ENCODE measurements at regions of chr10 and their contacts with region 1.

Region 1: DNA sequence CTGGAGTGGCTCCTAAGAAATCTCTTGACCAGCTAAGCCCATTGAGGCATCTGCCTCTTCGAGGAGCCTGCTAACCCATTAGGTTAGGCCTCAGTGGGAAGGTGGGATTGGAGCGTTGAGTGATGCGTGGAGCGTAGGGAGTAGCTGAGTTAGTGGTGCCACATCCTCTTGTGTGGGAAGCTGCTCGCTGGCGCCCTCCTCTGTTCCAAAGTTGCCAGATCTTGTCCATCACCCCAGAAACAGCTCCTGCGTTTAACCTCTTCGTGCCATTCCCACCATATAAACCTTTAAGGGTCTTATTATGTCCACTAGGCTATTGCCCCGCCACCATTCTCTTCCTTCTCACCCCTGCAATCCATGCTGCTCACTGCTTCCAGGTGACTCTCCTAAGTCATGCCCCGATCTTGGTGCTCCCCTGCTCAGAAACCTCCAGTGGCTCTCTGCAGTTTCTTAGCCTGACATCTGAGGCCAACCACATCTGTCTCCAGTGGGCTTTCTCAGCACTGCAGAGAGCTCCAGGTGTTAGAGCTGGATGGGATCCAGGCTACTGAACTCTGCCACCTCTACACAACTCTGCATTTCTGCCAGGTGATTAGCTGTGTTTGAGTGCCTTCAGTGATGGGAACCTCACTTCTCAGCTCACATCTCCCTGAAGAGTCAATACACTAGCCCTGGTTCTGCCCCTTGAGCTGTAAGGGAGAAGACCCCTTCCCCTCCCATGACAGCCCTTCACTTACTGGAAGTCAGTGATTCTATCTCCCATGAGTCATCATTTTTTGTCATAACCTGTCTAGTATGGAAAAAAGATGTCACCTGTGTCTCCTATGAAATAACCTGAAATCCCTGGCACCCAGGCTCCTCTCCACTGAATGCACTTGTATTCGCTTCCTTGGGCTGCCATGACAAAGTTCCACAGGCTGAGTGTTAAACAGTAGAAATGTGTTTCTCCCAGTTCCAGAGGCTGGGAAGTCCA is 65.0 kb upstream of the FGFR2 start:
- DNase-seq: peak; percentile 80
- ATAC-seq: peak; percentile 93
- H3K4me3 Mint-ChIP-seq: no peak overlapping the region
- H3K27ac Mint-ChIP-seq: no peak overlapping the region
- H3K4me1 Mint-ChIP-seq: peaks cover 6% of the 10 kb centered on the region
- H3K27me3 Mint-ChIP-seq: no peaks in the 10 kb centered on the region; the same call in 1 of the 2 replicates
- CTCF ChIP-seq: peak; percentile 85

Region 2: DNA sequence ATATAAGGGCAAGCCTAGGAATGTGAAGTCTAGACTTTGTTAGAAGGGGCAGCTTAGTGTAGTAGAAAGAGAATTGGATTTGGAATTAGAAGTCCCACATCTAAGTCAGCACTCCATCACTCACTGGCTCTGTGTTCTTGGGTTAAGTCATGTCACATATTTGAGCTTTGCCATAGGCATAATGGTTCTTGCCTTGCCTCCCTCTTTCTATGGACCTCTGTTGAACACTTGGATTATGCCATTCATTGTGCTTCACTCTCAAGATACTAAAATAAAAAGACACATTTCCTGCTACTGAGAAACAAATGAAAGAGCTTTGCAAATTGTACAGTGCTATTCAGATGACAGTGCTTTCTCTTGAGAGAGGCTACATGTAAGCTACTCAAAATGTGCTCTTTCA is 1734.8 kb before region 1 on chr10:
- CTCF ChIA-PET with region 1: no interaction called
- POLR2A ChIA-PET with region 1: no interaction called
- DNase-seq: no peak
- ATAC-seq: no peak
- H3K4me3 Mint-ChIP-seq: no peak overlapping the region
- H3K27ac Mint-ChIP-seq: peak overlapping the region; percentile 12; the same call in 1 of the 2 replicates
- H3K4me1 Mint-ChIP-seq: no peaks in the 10 kb centered on the region
- H3K27me3 Mint-ChIP-seq: no peaks in the 10 kb centered on the region
- CTCF ChIP-seq: no peak

Region 3: GRCh38 chr10:121598207-121598862 is 64.9 kb before region 1 on chr10 and contains the start of gene FGFR2:
- CTCF ChIA-PET with region 1: interaction called, 11 read pairs
- POLR2A ChIA-PET with region 1: no interaction called
- DNase-seq: peak; percentile 89
- ATAC-seq: peak; percentile 77
- H3K4me3 Mint-ChIP-seq: peak within 1 kb of the TSS; percentile 99
- H3K27ac Mint-ChIP-seq: peak within 1 kb of the TSS; percentile 99
- H3K4me1 Mint-ChIP-seq: peaks cover 60% of the 10 kb centered on the region
- H3K27me3 Mint-ChIP-seq: peaks cover 4% of the 10 kb centered on the region; the same call in 1 of the 2 replicates
- CTCF ChIP-seq: no peak
- total RNA-seq, gene FGFR2: 88.6 to 95.0 TPM (median 90.4 TPM) in 3 replicates

Region 4: GRCh38 chr10:121608469-121609190 is 54.6 kb before region 1 on chr10:
- CTCF ChIA-PET with region 1: interaction called, 23 read pairs
- POLR2A ChIA-PET with region 1: no interaction called
- DNase-seq: peak; percentile 72
- ATAC-seq: peak; percentile 81
- H3K4me3 Mint-ChIP-seq: peak overlapping the region; percentile 40; the same call in 1 of the 2 replicates
- H3K27ac Mint-ChIP-seq: no peak overlapping the region
- H3K4me1 Mint-ChIP-seq: peaks cover 34% of the 10 kb centered on the region
- H3K27me3 Mint-ChIP-seq: peaks cover 16% of the 10 kb centered on the region
- CTCF ChIP-seq: peak; percentile 93

Region 5: GRCh38 chr10:121696854-121697253 is 33.6 kb after region 1 on chr10:
- CTCF ChIA-PET with region 1: interaction called, 24 read pairs
- POLR2A ChIA-PET with region 1: no interaction called
- DNase-seq: peak; percentile 87
- ATAC-seq: peak; percentile 87
- H3K4me3 Mint-ChIP-seq: no peak overlapping the region
- H3K27ac Mint-ChIP-seq: no peak overlapping the region
- H3K4me1 Mint-ChIP-seq: peaks cover 14% of the 10 kb centered on the region
- H3K27me3 Mint-ChIP-seq: 0 out of 2 replicates have a peak, but pooled peaks cover 3% of the 10 kb centered on the region
- CTCF ChIP-seq: peak; percentile 70

Region 6: GRCh38 chr10:121734589-121735045 is 71.4 kb after region 1 on chr10:
- CTCF ChIA-PET with region 1: interaction called, 19 read pairs
- POLR2A ChIA-PET with region 1: no interaction called
- DNase-seq: peak; percentile 25
- ATAC-seq: peak; percentile 62
- H3K4me3 Mint-ChIP-seq: no peak overlapping the region
- H3K27ac Mint-ChIP-seq: no peak overlapping the region
- H3K4me1 Mint-ChIP-seq: peaks cover 35% of the 10 kb centered on the region
- H3K27me3 Mint-ChIP-seq: peaks cover 9% of the 10 kb centered on the region
- CTCF ChIP-seq: peak; percentile 41

Region 7: GRCh38 chr10:121900443-121901174 is 237.4 kb after region 1 on chr10:
- CTCF ChIA-PET with region 1: interaction called, 10 read pairs
- POLR2A ChIA-PET with region 1: no interaction called
- DNase-seq: no peak
- ATAC-seq: peak; percentile 86
- H3K4me3 Mint-ChIP-seq: no peak overlapping the region
- H3K27ac Mint-ChIP-seq: peak overlapping the region; percentile 52; the same call in 1 of the 2 replicates
- H3K4me1 Mint-ChIP-seq: peaks cover 12% of the 10 kb centered on the region
- H3K27me3 Mint-ChIP-seq: no peaks in the 10 kb centered on the region
- CTCF ChIP-seq: peak; percentile 45

Measured in WTC11 (cell line).